ENCODE measurements at regions of chr6 and their contacts with region 1.

Region 1: DNA sequence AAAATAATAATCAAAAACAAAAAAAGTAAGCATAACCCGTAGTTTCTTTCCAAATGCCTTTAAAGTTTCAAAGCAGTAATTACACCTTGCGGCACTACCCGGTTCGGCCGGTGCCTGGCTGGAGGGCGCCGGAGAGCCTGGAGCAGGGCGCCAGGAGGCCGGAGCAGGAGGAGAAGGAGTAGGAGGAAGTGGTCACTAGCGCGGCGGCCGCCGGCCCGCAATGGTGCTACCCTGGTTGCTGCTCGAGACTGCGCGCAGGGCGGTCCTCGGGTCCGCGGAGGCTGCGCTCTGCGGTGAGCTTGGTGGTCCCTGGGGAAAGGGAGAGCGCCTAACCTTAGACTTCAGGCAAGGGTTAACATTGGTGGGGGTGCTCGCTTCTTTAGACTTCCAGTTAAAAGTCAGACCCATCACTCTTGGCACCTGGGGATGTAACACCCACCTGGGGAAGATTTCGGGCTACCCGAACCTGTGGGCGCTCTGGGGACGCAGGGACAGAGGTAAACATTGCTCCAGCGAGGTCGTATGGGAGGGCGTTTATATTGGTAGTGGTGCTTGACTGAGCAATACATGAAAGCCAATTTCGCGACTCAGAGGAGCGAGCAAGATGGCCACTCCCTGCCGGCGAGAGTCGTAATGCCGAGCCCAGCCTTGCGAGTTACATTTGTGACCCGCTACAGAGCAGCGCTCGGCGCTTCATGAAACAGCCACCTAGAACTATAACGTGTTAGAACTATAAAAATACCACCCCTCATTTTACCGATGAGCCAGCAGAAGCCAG is 5.8 kb upstream of the USP45 start:
- DNase-seq: peak; percentile 61
- ATAC-seq: peak; percentile 89
- H3K4me3 ChIP-seq: peak overlapping the region; percentile 76 to 83
- H3K27ac ChIP-seq: peak overlapping the region; percentile 93
- H3K4me1 ChIP-seq: peaks cover 18 to 26% of the 10 kb centered on the region in 2 experiments; a peak in 3 of 4 replicates
- H3K27me3 ChIP-seq: no peaks in the 10 kb centered on the region
- CTCF ChIP-seq: peak; percentile 31 to 79 (median 77); a peak in 5 of 6 replicates
- POLR2A ChIP-seq: peak; percentile 64
- RAD21 ChIP-seq: peak; percentile 48; the same call in 1 of the 2 replicates

Region 2: DNA sequence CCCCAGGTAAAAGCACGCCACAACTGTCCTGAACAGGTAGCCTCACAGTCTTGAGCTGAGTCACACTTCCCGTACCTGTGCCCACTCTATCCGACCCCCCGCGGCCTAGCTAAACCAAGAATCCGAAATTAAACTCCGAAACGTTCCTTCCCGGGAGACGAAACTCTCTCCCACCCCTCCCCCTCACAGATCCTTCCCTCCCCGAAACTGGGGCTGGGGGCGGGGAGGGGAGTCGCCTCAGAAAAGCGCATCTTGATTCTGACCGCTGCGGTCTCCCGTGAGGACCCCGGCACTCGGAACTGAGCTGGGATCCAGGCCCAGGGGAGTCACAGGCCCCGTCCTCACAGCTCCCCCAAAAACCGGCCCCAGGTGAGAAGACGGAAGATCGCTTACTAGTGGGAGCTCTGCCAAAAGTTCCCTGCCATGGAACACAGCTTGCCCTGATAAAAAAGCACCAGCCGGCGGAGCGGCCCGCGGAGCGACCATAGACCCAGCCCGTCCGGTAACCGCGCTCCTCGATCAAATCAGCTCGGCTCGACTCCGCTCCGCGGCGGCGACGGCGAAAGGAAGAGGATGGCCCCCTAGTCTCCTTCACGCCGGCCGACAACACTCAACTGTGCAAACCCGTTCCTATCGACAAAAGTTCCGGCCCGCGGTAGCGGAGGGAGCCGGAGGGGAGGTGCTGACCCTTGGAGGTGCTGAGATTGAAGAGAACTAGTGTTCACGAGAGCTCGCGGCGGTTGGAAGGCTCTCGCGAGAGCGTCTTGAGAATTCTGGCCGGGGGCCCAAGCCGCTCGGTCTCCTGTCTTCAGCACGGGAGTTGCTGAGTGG is 47.3 kb after region 1 on chr6 and contains the start of gene CCNC:
- CTCF ChIA-PET with region 1: no interaction called
- POLR2A ChIA-PET with region 1: no interaction called
- RAD21 ChIA-PET with region 1: no interaction called
- intact Hi-C with region 1: loop called (anchors 1 kb)
- DNase-seq: peak; percentile 95
- ATAC-seq: peak; percentile 97
- H3K4me3 ChIP-seq: peak within 1 kb of the TSS; percentile 94 to 97
- H3K27ac ChIP-seq: peak within 1 kb of the TSS; percentile 86
- H3K4me1 ChIP-seq: peaks cover 0 to 15% of the 10 kb centered on the region in 2 experiments; a peak in 3 of 4 replicates
- H3K27me3 ChIP-seq: no peaks in the 10 kb centered on the region
- CTCF ChIP-seq: no peak
- POLR2A ChIP-seq: peak; percentile 85
- RAD21 ChIP-seq: no peak
- total RNA-seq, gene CCNC: 78.5 TPM

Region 3: GRCh38 chr6:99603421-99604165 is 82.5 kb after region 1 on chr6:
- CTCF ChIA-PET with region 1: no interaction called
- POLR2A ChIA-PET with region 1: no interaction called
- RAD21 ChIA-PET with region 1: no interaction called
- intact Hi-C with region 1: no loop called
- DNase-seq: no peak
- ATAC-seq: no peak
- H3K4me3 ChIP-seq: no peak overlapping the region
- H3K27ac ChIP-seq: no peak overlapping the region
- H3K4me1 ChIP-seq: no peaks in the 10 kb centered on the region
- H3K27me3 ChIP-seq: no peaks in the 10 kb centered on the region
- CTCF ChIP-seq: no peak
- POLR2A ChIP-seq: no peak
- RAD21 ChIP-seq: no peak